Activated naive CD8-positive, alpha-beta T cell treated with anti-CD3 and anti-CD28 coated beads, Interleukin-2, amount 10 ng/mL, durations not matched to agents 7 days and 5 days (primary cell): ENCODE measurements at regions of chr11 and their contacts with region 1.

Region 1: DNA sequence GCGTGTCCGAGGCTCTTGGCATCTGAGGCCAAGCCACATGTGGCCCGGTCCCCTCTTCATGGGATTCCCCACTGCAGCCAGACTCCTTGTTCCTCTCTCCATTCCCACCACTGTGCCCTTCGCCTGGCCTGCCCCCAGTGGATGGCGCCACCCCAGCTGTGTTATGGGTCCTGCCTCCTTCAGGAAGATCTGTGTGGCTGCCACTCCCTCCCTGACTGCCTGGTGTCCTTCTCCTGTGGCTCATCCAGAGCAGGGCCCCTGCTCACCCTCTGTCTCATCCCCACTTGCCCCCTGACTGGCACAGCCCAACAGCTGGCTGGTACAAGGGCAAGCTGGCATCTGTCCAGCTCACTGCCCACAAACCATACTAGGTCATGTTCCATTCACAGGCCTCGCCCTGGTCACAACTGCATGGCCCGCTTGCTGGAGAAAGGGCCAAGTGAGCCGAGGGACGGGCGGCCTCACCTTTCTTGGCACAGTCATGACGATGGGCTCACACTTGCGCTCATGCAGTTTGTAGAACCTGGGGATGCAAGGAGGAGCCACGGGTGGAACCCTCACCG is 1.9 kb upstream of the PTPRCAP start:
- DNase-seq: peak; percentile 61
- ATAC-seq: no peak
- H3K4me3 Mint-ChIP-seq: peak overlapping the region; percentile 98
- H3K27ac Mint-ChIP-seq: peak overlapping the region; percentile 96
- H3K4me1 Mint-ChIP-seq: peaks cover 32% of the 10 kb centered on the region
- H3K27me3 Mint-ChIP-seq: no peaks in the 10 kb centered on the region

Region 2: DNA sequence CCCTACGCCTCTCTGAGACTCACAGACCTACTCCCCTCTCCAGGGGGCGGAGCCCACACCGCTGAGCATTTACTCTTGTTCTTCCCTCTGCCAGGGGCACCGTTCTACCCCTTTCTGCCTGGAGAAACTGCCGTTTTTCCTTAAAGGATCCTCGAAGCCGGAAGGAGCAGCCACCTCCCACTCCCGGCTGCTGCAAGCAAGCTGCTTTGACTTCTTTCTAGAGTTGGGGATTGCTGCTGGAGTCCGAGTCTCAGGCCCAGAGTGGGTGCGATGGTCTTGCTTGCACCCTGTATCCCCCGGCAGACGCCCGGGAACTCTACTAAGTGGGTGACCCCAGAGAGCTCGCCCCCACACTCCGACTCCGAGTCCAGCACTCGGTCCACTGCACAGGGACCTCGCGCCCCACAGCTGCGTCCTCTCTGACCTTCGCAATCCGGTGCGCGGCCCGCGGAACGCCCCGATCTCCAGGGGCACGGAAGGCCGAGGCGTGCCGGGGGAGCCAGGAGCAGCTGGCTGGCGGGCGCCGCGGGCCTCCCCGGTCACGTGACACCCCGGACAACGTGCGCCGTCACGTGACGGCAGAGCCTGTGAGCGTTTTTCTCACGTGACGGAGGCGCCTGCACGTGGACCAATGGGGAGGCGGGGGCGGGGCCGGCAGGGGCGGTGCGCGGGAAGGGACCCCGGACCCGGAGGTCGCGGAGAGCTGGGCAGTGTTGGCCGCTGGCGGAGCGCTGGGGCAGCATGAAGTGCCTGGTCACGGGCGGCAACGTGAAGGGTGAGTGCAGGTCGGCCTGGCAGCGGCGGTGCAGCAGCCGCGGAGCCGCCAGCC is 47.9 kb before region 1 on chr11 and contains the start of gene RAD9A:
- POLR2A ChIA-PET with region 1: interaction called, 491 read pairs
- DNase-seq: peak; percentile 93
- ATAC-seq: peak; percentile 68
- H3K4me3 Mint-ChIP-seq: peak within 1 kb of the TSS; percentile 96
- H3K27ac Mint-ChIP-seq: peak within 1 kb of the TSS; percentile 75
- H3K4me1 Mint-ChIP-seq: peaks cover 36% of the 10 kb centered on the region
- H3K27me3 Mint-ChIP-seq: no peaks in the 10 kb centered on the region
- total RNA-seq, gene RAD9A: 65.3 to 67.1 TPM

Region 3: DNA sequence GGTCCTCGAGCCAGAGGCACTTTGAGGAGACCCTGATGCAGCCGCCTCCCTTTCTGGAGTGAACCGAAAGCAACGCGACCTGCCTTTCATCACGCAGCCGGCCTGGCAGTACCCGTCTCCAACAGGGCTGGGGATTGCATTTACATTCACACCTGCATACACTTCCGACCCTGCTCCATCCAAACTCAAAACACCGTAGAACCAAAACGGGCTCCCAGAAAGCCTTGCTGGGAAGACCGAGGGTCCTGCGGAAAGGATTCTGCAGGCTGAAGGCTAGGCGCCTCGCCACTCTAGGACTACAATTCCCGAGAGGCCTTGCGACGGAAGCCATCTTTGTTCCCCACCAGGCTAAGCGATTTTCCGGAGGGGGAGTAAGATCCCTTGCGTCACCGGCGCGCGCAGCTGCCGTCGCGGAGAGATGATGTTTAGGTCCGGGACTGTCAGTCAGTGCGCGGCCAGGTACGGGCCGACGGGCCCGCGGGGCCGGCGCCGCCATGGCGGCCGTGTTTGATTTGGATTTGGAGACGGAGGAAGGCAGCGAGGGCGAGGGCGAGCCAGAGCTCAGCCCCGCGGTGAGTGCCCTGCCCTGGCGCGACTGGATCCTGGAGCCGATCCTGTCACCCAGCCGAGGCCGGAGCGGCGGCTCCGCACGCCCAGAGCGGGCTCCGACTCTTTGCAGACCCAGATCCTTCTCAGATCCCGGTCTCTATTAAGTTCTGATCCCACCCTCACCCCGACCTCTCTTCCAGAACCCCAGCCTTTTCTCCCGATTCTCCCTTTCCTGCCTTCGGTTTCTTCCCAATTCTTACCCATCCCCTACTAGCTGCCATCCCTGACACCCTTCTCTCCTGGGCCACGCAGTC is 11.1 kb before region 1 on chr11 and contains the start of gene RPS6KB2:
- POLR2A ChIA-PET with region 1: interaction called, 412 read pairs
- DNase-seq: peak; percentile 99
- ATAC-seq: peak; percentile 91
- H3K4me3 Mint-ChIP-seq: peak within 1 kb of the TSS; percentile 97
- H3K27ac Mint-ChIP-seq: peak within 1 kb of the TSS; percentile 93
- H3K4me1 Mint-ChIP-seq: peaks cover 33% of the 10 kb centered on the region
- H3K27me3 Mint-ChIP-seq: no peaks in the 10 kb centered on the region
- total RNA-seq, gene RPS6KB2: 69.0 to 71.4 TPM

Region 4: GRCh38 chr11:67468835-67469811 is 29.7 kb after region 1 on chr11 and contains the start of gene TMEM134:
- POLR2A ChIA-PET with region 1: interaction called, 145 read pairs
- DNase-seq: peak; percentile 97
- ATAC-seq: peak; percentile 76
- H3K4me3 Mint-ChIP-seq: peak within 1 kb of the TSS; percentile 95
- H3K27ac Mint-ChIP-seq: peak within 1 kb of the TSS; percentile 79
- H3K4me1 Mint-ChIP-seq: peaks cover 21% of the 10 kb centered on the region
- H3K27me3 Mint-ChIP-seq: no peaks in the 10 kb centered on the region
- total RNA-seq, gene TMEM134: 63.2 to 69.1 TPM

Region 5: DNA sequence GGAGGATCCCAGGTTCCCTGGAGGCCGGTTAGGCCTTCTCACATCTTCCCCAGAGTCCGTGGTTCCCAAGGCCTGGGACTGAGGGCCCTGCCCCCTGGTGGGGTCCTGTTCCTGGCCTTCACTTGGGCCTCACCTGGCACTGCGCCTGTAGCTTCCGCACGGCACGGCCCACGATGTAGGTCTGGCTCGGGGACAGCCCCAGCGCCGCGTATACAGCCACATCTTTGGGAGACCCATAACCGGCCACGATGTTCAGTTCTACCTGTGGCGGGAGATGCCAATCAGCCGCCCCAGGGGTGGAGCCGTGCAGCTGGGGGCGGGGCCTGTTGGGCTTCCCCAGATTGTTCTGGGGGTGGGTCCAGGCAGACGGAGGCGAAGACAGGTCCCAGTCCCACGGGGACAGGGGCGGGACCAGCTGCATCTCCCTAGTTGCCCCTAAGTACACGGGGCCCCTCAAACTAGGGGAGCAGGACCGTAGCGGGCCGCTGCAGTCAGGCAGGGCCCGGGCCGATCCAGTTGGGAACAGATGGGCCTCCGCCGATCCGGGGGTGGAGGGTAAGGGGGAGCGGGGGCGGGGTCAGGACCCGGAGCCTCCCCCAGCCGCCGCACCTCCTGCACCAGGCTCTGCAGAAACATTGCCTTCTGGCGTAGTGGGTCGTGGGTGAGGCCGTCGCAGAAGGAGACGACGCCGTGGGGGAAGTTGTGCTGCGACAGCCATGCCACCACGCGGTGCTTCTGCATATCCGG is 53.6 kb after region 1 on chr11:
- POLR2A ChIA-PET with region 1: interaction called, 28 read pairs
- DNase-seq: no peak
- ATAC-seq: no peak
- H3K4me3 Mint-ChIP-seq: no peak overlapping the region
- H3K27ac Mint-ChIP-seq: no peak overlapping the region
- H3K4me1 Mint-ChIP-seq: peaks cover 11% of the 10 kb centered on the region
- H3K27me3 Mint-ChIP-seq: no peaks in the 10 kb centered on the region